ENCODE measurements at regions of chr16 and their contacts with region 1.

Region 1: DNA sequence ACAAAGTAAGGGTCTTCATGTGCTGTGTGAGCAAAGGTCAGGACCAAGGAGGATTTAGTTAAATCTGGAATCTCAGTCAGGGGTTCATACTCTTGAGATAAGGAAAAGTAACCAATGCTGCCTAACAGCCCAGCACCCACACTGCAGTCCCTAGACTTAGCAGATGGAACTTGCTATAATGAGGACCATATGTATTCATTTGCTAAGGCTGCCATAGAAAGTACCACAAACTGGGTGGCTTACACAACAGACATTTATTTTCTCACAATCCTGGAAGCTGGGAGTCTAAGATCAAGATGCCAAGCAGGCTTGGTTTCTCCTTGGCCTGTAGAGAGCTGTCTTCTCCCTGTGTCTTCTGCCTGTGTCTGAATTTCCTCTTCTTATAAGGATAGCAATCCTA is 20.8 kb downstream of the ZP2 start:
- DNase-seq: no peak
- H3K4me3 ChIP-seq: no peak overlapping the region
- H3K27me3 ChIP-seq: no peaks in the 10 kb centered on the region; the same call in 1 of the 2 replicates
- CTCF ChIP-seq: no peak

Region 2: DNA sequence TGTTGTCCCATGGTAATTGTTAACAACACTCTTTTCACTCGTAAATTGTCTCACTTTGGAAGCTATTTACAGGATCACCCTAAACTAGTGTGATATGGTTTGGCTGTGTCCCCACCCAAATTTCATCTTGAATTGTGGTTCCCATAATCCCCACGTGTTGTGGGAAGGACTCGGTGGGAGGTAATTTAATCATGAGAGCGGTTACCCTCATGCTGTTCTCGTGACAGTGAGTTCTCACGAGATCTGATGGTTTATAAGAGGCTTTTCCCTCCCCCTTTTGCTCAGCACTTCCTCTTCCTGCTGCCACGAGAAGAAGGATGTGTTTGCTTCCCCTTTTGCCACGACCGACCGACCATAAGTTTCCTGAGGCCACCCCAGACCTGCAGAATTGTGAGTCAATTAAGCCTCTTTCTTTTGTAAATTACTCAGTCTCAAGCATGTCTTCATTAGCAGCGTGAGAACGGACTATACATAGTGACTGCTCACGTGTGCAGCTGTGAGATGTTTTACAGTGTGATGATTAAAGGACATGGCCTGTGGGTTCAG is 74.4 kb before region 1 on chr16:
- CTCF ChIA-PET with region 1: no interaction called
- POLR2A ChIA-PET with region 1: no interaction called
- DNase-seq: no peak
- H3K4me3 ChIP-seq: no peak overlapping the region
- H3K27me3 ChIP-seq: no peaks in the 10 kb centered on the region; the same call in 1 of the 2 replicates
- CTCF ChIP-seq: no peak

Region 3: GRCh38 chr16:21158208-21159110 is 32.1 kb before region 1 on chr16 and contains the start of gene LDAF1:
- CTCF ChIA-PET with region 1: interaction called, 25 read pairs
- POLR2A ChIA-PET with region 1: no interaction called
- DNase-seq: no peak
- H3K4me3 ChIP-seq: peak within 1 kb of the TSS; percentile 89
- H3K27me3 ChIP-seq: no peaks in the 10 kb centered on the region
- CTCF ChIP-seq: 0 out of 2 replicates have a peak, but pooled peaks have one; percentile 3
- polyA plus RNA-seq, gene LDAF1: 28.1 and 31.1 TPM in 2 replicates

Region 4: GRCh38 chr16:21169249-21169981 is 21.2 kb before region 1 on chr16:
- CTCF ChIA-PET with region 1: interaction called, 10 read pairs
- POLR2A ChIA-PET with region 1: no interaction called
- DNase-seq: no peak
- H3K4me3 ChIP-seq: no peak overlapping the region
- H3K27me3 ChIP-seq: no peaks in the 10 kb centered on the region
- CTCF ChIP-seq: no peak

Region 5: DNA sequence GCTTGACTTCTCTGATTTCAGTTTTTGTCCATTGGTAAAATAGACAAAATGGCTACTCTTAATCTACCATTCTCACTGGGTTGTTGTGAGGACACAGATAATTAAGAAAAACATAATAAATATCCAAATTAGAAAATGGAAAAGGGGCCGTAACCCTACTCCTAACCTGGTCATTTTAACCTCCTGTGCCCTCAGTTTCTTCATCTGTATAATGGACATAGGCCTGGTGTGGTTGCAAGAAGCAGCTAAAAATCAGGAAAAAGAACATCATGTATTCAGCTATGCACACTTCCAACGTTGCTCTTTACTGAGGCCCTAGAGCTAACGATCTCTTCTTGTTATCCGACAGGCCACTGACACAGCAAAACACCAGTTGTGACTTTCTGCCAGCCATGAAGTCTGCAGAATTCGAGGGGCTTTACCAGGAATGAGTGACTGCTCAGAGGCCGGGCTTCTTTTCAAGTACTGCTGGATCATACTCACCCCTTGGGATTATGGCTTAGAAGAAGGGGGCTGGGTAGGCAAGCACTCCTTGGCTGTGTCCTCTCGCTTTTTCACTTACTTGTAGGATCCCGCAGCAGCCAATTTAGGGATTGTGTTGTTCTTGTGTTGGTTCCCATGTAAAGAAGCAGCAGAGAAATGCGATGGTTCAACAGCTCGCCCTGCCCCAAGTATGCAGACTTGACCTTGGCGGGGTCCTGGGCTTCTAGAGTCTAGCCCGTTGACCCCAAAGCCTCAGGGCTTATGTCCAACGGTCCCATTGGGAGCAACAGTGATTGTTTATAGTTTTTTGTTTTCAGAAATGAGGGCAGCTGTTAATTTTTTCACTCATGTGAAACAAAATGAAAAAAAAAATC is 11.2 kb before region 1 on chr16:
- CTCF ChIA-PET with region 1: interaction called, 30 read pairs
- POLR2A ChIA-PET with region 1: no interaction called
- DNase-seq: no peak
- H3K4me3 ChIP-seq: no peak overlapping the region
- H3K27me3 ChIP-seq: no peaks in the 10 kb centered on the region
- CTCF ChIP-seq: no peak

Region 6: GRCh38 chr16:21235199-21235585 is 44.6 kb after region 1 on chr16:
- CTCF ChIA-PET with region 1: no interaction called
- POLR2A ChIA-PET with region 1: no interaction called
- DNase-seq: no peak
- H3K4me3 ChIP-seq: no peak overlapping the region
- H3K27me3 ChIP-seq: no peaks in the 10 kb centered on the region
- CTCF ChIP-seq: no peak

Region 7: DNA sequence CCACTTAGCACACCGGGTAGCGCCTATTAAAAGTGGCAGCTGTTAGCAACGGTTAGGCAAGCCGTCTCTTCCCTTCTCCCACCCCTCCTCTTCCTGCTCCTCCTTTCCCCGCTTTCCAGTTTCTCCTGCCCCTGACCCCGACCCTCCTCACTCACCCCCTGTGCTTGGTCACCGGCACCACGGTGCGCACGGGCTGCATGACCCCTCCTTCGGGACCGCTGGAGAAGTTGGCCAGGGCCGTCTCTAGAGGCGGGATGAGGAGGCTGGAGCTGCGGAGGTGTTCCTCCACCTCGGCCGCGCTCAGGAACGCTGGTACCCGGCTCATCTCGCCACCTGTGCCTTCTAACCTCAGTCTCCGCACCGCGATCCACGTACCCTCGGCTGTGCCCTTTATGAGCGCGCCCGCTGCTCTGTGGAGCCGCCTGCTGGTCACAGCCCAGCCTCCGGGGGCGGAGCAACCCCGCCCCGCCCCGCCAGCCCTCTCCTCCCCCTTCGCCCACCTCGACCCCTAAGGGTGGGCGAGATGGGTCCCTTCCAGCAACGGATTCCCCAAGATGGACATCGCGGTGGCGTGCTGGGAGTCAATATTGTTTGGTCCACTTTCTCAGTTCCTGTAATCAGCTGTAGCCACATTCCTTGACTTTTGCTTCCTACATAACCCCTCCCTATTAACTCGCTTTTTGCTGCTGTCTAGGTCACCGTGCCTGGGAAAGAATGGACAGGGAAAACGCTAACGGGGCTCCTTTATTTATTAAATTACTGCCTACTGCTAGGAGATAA is 87.5 kb after region 1 on chr16 and contains the start of gene CRYM:
- CTCF ChIA-PET with region 1: interaction called, 20 read pairs
- POLR2A ChIA-PET with region 1: no interaction called
- DNase-seq: no peak
- H3K4me3 ChIP-seq: peak within 1 kb of the TSS; percentile 20
- H3K27me3 ChIP-seq: peaks cover 24% of the 10 kb centered on the region
- CTCF ChIP-seq: peak; percentile 90
- polyA plus RNA-seq, gene CRYM: not detected in 2 replicates

Region 8: DNA sequence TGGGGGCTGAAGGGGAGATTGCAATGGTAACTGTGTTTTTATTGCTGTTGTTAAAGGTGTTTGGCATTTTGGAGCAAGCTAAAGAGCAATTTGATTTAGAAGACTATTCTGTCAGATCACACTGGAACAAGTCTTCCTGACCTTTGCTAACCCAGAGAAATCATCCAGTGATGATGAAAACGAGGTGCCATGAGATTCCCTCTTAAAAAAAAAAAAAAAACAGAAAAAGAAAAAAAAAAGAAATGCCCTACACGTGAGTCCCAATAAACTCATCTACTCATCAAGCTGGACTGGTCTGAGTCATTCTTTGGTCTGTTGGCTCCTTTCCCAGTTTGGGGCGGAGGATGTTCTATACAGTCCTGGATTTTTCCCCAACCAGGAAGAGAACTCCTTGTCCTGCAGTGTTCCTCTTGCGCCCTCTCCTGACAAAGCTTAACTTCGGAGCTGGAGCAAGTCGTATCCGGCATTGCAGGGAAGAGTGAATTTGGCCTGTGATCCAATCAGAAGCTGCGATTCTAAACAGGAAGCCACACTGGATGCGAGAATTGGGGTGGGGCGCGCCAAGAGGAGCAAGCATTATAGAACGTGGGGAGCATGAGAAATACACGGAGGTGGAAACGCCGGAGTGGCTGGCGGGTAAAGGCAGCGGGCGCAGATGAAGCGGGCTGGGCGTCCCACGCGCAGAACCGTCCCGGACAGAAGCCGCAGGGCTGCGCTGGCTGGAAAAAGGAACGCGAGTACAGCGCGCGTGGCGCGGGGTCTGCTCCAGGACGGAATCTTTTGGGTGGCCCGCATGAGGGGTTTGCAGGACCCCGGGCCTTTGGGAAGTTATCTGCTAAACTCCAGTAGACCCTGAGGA is 109.9 kb after region 1 on chr16:
- CTCF ChIA-PET with region 1: interaction called, 24 read pairs
- POLR2A ChIA-PET with region 1: no interaction called
- DNase-seq: peak; percentile 100
- H3K4me3 ChIP-seq: peak overlapping the region; percentile 75
- H3K27me3 ChIP-seq: no peaks in the 10 kb centered on the region
- CTCF ChIP-seq: peak; percentile 92

Region 9: GRCh38 chr16:21646721-21647561 is 456.3 kb after region 1 on chr16:
- CTCF ChIA-PET with region 1: no interaction called
- POLR2A ChIA-PET with region 1: no interaction called
- DNase-seq: no peak
- H3K4me3 ChIP-seq: no peak overlapping the region
- H3K27me3 ChIP-seq: no peaks in the 10 kb centered on the region
- CTCF ChIP-seq: no peak

Measured in BJ (cell line).